ENCODE measurements at regions of chr1 and their contacts with region 1.

Region 1: GRCh38 chr1:21368515-21369289 is 71.2 kb upstream of the NBPF3 start:
- DNase-seq: peak; percentile 37 to 83 (median 62)
- ATAC-seq: peak; percentile 60
- H3K4me3 ChIP-seq: no peak overlapping the region
- H3K4me3 Mint-ChIP-seq: no peak overlapping the region
- H3K27ac ChIP-seq: no peak overlapping the region
- H3K27ac Mint-ChIP-seq: no peak overlapping the region
- H3K4me1 ChIP-seq: peaks cover 7% of the 10 kb centered on the region
- H3K4me1 Mint-ChIP-seq: peaks cover 14% of the 10 kb centered on the region
- H3K27me3 ChIP-seq: no peaks in the 10 kb centered on the region
- H3K27me3 Mint-ChIP-seq: no peaks in the 10 kb centered on the region
- CTCF ChIP-seq: peak; percentile 100

Region 2: GRCh38 chr1:21216835-21217811 is 151.6 kb before region 1 on chr1:
- CTCF ChIA-PET with region 1: interaction called, 14 read pairs
- POLR2A ChIA-PET with region 1: no interaction called
- intact Hi-C with region 1: no loop called
- DNase-seq: peak; percentile 48 to 84 (median 61)
- ATAC-seq: peak; percentile 84
- H3K4me3 ChIP-seq: no peak overlapping the region
- H3K4me3 Mint-ChIP-seq: no peak overlapping the region
- H3K27ac ChIP-seq: no peak overlapping the region
- H3K27ac Mint-ChIP-seq: peak overlapping the region; percentile 22
- H3K4me1 ChIP-seq: no peaks in the 10 kb centered on the region
- H3K4me1 Mint-ChIP-seq: peaks cover 5% of the 10 kb centered on the region
- H3K27me3 ChIP-seq: no peaks in the 10 kb centered on the region
- H3K27me3 Mint-ChIP-seq: no peaks in the 10 kb centered on the region
- CTCF ChIP-seq: peak; percentile 83

Region 3: GRCh38 chr1:21246905-21247642 is 121.6 kb before region 1 on chr1:
- CTCF ChIA-PET with region 1: interaction called, 175 read pairs
- POLR2A ChIA-PET with region 1: no interaction called
- intact Hi-C with region 1: no loop called
- DNase-seq: no peak
- ATAC-seq: no peak
- H3K4me3 ChIP-seq: no peak overlapping the region
- H3K4me3 Mint-ChIP-seq: no peak overlapping the region
- H3K27ac ChIP-seq: no peak overlapping the region
- H3K27ac Mint-ChIP-seq: no peak overlapping the region
- H3K4me1 ChIP-seq: no peaks in the 10 kb centered on the region
- H3K4me1 Mint-ChIP-seq: no peaks in the 10 kb centered on the region
- H3K27me3 ChIP-seq: no peaks in the 10 kb centered on the region
- H3K27me3 Mint-ChIP-seq: no peaks in the 10 kb centered on the region
- CTCF ChIP-seq: no peak

Region 4: GRCh38 chr1:21270086-21270689 is 98.5 kb before region 1 on chr1:
- CTCF ChIA-PET with region 1: interaction called, 62 read pairs
- POLR2A ChIA-PET with region 1: interaction called, 5 read pairs
- intact Hi-C with region 1: loop called in 1 of 2 experiments (anchors 5 kb)
- DNase-seq: peak; percentile 78 to 89 (median 84)
- ATAC-seq: peak; percentile 93
- H3K4me3 ChIP-seq: no peak overlapping the region
- H3K4me3 Mint-ChIP-seq: no peak overlapping the region
- H3K27ac ChIP-seq: no peak overlapping the region
- H3K27ac Mint-ChIP-seq: peak overlapping the region; percentile 9
- H3K4me1 ChIP-seq: peaks cover 17% of the 10 kb centered on the region
- H3K4me1 Mint-ChIP-seq: peaks cover 33% of the 10 kb centered on the region
- H3K27me3 ChIP-seq: no peaks in the 10 kb centered on the region
- H3K27me3 Mint-ChIP-seq: no peaks in the 10 kb centered on the region
- CTCF ChIP-seq: peak; percentile 89

Region 5: GRCh38 chr1:21324368-21325141 is 44.1 kb before region 1 on chr1:
- CTCF ChIA-PET with region 1: interaction called, 21 read pairs
- POLR2A ChIA-PET with region 1: interaction called, 4 read pairs
- intact Hi-C with region 1: no loop called
- DNase-seq: peak in 12 of 14 experiments; percentile 35 to 83 (median 52)
- ATAC-seq: peak; percentile 65
- H3K4me3 ChIP-seq: peak overlapping the region; percentile 24
- H3K4me3 Mint-ChIP-seq: peak overlapping the region; percentile 70
- H3K27ac ChIP-seq: peak overlapping the region; percentile 73 to 76
- H3K27ac Mint-ChIP-seq: peak overlapping the region; percentile 93
- H3K4me1 ChIP-seq: peaks cover 77% of the 10 kb centered on the region
- H3K4me1 Mint-ChIP-seq: peaks cover 88% of the 10 kb centered on the region
- H3K27me3 ChIP-seq: no peaks in the 10 kb centered on the region
- H3K27me3 Mint-ChIP-seq: no peaks in the 10 kb centered on the region
- CTCF ChIP-seq: no peak

Region 6: GRCh38 chr1:21351898-21352297 is 16.8 kb before region 1 on chr1:
- CTCF ChIA-PET with region 1: interaction called, 11 read pairs
- POLR2A ChIA-PET with region 1: no interaction called
- intact Hi-C with region 1: no loop called
- DNase-seq: no peak
- ATAC-seq: no peak
- H3K4me3 ChIP-seq: no peak overlapping the region
- H3K4me3 Mint-ChIP-seq: no peak overlapping the region
- H3K27ac ChIP-seq: no peak overlapping the region
- H3K27ac Mint-ChIP-seq: no peak overlapping the region
- H3K4me1 ChIP-seq: no peaks in the 10 kb centered on the region
- H3K4me1 Mint-ChIP-seq: no peaks in the 10 kb centered on the region
- H3K27me3 ChIP-seq: no peaks in the 10 kb centered on the region
- H3K27me3 Mint-ChIP-seq: no peaks in the 10 kb centered on the region
- CTCF ChIP-seq: no peak

Region 7: DNA sequence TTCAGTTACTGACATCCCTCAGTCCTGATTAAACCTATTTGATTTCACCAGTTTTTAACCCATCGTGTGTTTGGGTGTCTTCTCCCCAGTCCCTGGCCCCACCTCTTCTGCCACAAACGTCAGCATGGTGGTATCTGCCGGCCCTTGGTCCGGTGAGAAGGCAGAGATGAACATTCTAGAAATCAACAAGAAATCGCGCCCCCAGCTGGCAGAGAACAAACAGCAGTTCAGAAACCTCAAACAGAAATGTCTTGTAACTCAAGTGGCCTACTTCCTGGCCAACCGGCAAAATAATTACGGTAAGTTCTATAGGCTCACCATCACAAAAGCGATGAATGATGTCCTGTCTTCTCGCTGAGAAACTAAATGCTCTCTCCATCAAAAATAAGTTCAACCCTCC is 99.9 kb after region 1 on chr1:
- CTCF ChIA-PET with region 1: no interaction called
- POLR2A ChIA-PET with region 1: no interaction called
- intact Hi-C with region 1: no loop called
- DNase-seq: peak in 8 of 14 experiments; percentile 1 to 37 (median 13)
- ATAC-seq: no peak
- H3K4me3 ChIP-seq: no peak overlapping the region
- H3K4me3 Mint-ChIP-seq: no peak overlapping the region
- H3K27ac ChIP-seq: no peak overlapping the region
- H3K27ac Mint-ChIP-seq: no peak overlapping the region
- H3K4me1 ChIP-seq: no peaks in the 10 kb centered on the region
- H3K4me1 Mint-ChIP-seq: no peaks in the 10 kb centered on the region
- H3K27me3 ChIP-seq: no peaks in the 10 kb centered on the region
- H3K27me3 Mint-ChIP-seq: no peaks in the 10 kb centered on the region
- CTCF ChIP-seq: no peak